MCF 10A (cell line): ENCODE measurements at regions of chr18 and their contacts with region 1.

Region 1: DNA sequence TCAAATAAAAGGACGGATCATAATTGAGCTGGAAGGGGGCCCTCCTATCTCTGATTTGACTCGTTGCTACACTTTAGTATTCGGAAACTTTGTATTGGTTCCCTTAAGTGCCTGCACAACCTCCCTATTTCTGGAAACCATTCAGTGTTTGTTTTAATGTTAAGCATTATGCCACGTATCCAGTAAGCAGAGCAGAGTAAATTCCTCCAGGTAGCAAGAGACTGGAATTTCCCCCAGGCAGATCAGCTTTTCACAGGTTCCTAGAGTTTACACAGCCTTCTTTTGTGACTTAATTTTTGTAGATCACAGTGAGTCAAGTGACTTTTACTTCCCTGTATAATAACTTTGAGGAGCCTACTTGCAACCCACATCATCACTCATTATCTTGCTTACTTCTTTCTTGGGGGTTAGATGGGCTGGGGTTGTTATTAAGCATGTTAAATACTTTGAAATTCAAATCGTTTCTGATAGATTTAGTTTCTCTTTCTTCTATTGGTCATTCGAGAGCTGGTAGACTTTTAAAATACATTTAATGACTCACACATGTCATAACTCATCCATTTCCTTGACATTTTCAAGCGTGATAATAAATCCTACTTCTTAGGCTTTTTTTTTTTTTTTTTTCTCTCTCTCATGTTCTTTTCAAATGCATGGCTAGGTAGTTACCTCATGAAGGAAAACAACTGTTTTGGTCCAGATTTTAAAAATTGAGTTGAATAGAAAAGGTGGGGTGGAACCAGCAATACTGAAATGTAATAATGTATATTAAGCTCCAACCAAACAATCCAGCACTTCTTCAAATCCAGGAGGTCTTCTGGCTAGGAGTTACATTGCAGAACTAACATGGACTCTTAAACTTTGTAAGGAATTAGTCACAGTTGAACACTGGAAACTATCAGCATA is 219.3 kb downstream of the NEDD4L start:
- DNase-seq: peak; percentile 56
- H3K4me3 Mint-ChIP-seq: peak overlapping the region; percentile 77
- H3K27ac Mint-ChIP-seq: peak overlapping the region; percentile 86
- H3K4me1 Mint-ChIP-seq: peaks cover 33% of the 10 kb centered on the region
- H3K27me3 Mint-ChIP-seq: no peaks in the 10 kb centered on the region
- CTCF ChIP-seq: no peak

Region 2: DNA sequence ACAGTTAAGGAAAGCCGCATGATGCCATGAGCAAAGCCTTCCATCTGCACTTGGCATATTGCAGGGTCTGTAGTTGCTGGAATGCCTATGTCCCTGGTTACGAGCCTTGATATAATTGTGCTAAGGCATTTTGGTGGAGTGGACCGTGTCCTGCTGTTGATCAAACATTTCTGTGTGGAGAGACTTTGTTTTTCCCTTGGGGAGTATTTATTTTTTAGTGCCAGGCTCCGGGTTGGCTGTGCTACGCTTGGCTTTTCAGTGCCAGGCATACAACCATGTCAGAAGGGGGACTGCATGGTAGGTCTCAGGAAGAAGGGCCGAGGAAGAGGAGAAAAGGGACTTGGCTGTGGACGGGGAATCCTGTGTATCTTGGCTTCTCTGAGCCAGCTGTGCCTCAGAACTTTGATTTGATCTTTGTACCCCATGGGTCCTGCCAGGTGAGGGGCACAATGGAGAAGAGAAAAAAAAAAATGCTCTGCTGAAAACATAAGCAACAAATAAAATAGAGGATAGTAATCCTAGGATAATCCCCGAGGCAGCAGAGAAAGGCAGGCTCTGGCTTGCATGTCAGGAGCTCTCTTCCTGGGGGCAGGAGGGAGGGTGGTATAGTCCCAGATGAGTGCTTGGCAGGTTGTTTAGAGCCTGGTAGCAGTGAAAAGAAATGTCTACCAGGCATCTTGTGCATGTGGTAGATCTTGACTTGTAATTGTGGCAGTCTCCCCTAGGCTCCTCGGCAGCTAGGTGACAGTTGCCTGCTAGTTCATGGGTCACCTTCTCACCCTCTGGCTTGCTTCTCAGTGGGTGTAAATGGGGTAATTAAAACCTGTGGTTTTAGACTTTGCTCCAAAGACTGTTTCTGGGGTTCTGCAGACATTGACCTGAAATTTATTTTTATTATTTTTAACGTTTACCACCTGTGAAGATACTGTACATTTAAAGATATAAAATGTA is 13.8 kb after region 1 on chr18:
- CTCF ChIA-PET with region 1: interaction called, 6 read pairs
- POLR2A ChIA-PET with region 1: interaction called, 13 read pairs
- intact Hi-C with region 1: no loop called
- DNase-seq: peak; percentile 44
- H3K4me3 Mint-ChIP-seq: no peak overlapping the region
- H3K27ac Mint-ChIP-seq: peak overlapping the region; percentile 53
- H3K4me1 Mint-ChIP-seq: peaks cover 28% of the 10 kb centered on the region
- H3K27me3 Mint-ChIP-seq: no peaks in the 10 kb centered on the region
- CTCF ChIP-seq: no peak

Region 3: GRCh38 chr18:58302811-58303210 is 39.5 kb after region 1 on chr18:
- CTCF ChIA-PET with region 1: no interaction called
- POLR2A ChIA-PET with region 1: interaction called, 13 read pairs
- intact Hi-C with region 1: no loop called
- DNase-seq: no peak
- H3K4me3 Mint-ChIP-seq: no peak overlapping the region
- H3K27ac Mint-ChIP-seq: no peak overlapping the region
- H3K4me1 Mint-ChIP-seq: peaks cover 15% of the 10 kb centered on the region
- H3K27me3 Mint-ChIP-seq: no peaks in the 10 kb centered on the region
- CTCF ChIP-seq: no peak